Naive thymus-derived CD4-positive, alpha-beta T cell (primary cell): ENCODE measurements at regions of chr12 and their contacts with region 1.

Region 1: GRCh38 chr12:85237320-85237719 is 42.7 kb upstream of the ALX1 start:
- DNase-seq: no peak
- ATAC-seq: no peak
- H3K4me3 ChIP-seq: no peak overlapping the region
- H3K4me3 Mint-ChIP-seq: no peak overlapping the region
- H3K27ac ChIP-seq: no peak overlapping the region
- H3K27ac Mint-ChIP-seq: no peak overlapping the region
- H3K4me1 ChIP-seq: no peaks in the 10 kb centered on the region
- H3K4me1 Mint-ChIP-seq: no peaks in the 10 kb centered on the region
- H3K27me3 ChIP-seq: no peaks in the 10 kb centered on the region
- H3K27me3 Mint-ChIP-seq: no peaks in the 10 kb centered on the region

Region 2: GRCh38 chr12:85253823-85254222 is 16.5 kb after region 1 on chr12:
- CTCF ChIA-PET with region 1: no interaction called
- POLR2A ChIA-PET with region 1: no interaction called
- intact Hi-C with region 1: loop called in 1 of 2 experiments (anchors 2 kb)
- DNase-seq: no peak
- ATAC-seq: no peak
- H3K4me3 ChIP-seq: no peak overlapping the region
- H3K4me3 Mint-ChIP-seq: no peak overlapping the region
- H3K27ac ChIP-seq: no peak overlapping the region
- H3K27ac Mint-ChIP-seq: no peak overlapping the region
- H3K4me1 ChIP-seq: no peaks in the 10 kb centered on the region
- H3K4me1 Mint-ChIP-seq: no peaks in the 10 kb centered on the region
- H3K27me3 ChIP-seq: no peaks in the 10 kb centered on the region
- H3K27me3 Mint-ChIP-seq: no peaks in the 10 kb centered on the region

Region 3: DNA sequence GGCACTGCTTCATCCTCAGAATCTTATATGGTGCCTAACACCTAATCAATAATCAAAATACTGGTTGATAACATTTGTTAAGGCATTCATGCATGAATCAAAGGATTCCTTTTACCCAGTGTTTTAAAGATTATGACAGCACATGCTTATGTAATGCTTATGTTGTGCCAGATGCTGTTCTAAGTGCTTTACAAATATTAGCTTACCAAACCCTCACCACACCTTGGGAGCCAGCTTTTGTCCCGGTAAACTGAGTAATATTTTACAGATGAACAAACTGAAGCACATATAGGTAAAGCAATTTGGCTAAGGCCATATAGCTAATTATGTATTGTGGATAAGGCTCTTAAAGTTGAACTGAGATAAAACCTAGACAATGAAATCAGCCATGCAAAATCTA is 251.9 kb after region 1 on chr12:
- CTCF ChIA-PET with region 1: no interaction called
- POLR2A ChIA-PET with region 1: no interaction called
- intact Hi-C with region 1: no loop called
- DNase-seq: no peak
- ATAC-seq: no peak
- H3K4me3 ChIP-seq: no peak overlapping the region
- H3K4me3 Mint-ChIP-seq: no peak overlapping the region
- H3K27ac ChIP-seq: no peak overlapping the region
- H3K27ac Mint-ChIP-seq: no peak overlapping the region
- H3K4me1 ChIP-seq: no peaks in the 10 kb centered on the region
- H3K4me1 Mint-ChIP-seq: no peaks in the 10 kb centered on the region
- H3K27me3 ChIP-seq: no peaks in the 10 kb centered on the region
- H3K27me3 Mint-ChIP-seq: no peaks in the 10 kb centered on the region